ENCODE measurements at regions of chr7 and their contacts with region 1.

Region 1: GRCh38 chr7:75914730-75915585 is at the start of gene POR:
- DNase-seq: peak; percentile 75 to 99
- H3K4me3 ChIP-seq: peak within 1 kb of the TSS; percentile 66 to 89 (median 74)
- H3K27ac ChIP-seq: peak within 1 kb of the TSS; percentile 27; the same call in 1 of the 2 replicates
- H3K4me1 ChIP-seq: peaks cover 0 to 12% (median 4%) of the 10 kb centered on the region in 4 experiments; a peak in 4 of 7 replicates
- H3K27me3 ChIP-seq: no peaks in the 10 kb centered on the region
- CTCF ChIP-seq: no peak
- EP300 ChIP-seq: peak in 1 of 2 experiments; percentile 100; a peak in 2 of 3 replicates
- POLR2A ChIP-seq: peak; percentile 100
- RAD21 ChIP-seq: peak in 1 of 2 experiments; percentile 7; a peak in 2 of 4 replicates
- total RNA-seq, gene POR: 127 and 144 TPM in 2 replicates

Region 2: GRCh38 chr7:75814407-75814947 is 100.5 kb before region 1 on chr7:
- CTCF ChIA-PET with region 1: no interaction called
- POLR2A ChIA-PET with region 1: no interaction called
- DNase-seq: no peak
- H3K4me3 ChIP-seq: no peak overlapping the region
- H3K27ac ChIP-seq: no peak overlapping the region
- H3K4me1 ChIP-seq: peaks cover 0 to 3% (median 0%) of the 10 kb centered on the region in 4 experiments; a peak in 2 of 7 replicates
- H3K27me3 ChIP-seq: no peaks in the 10 kb centered on the region; a peak in 2 of 7 replicates
- CTCF ChIP-seq: no peak
- EP300 ChIP-seq: no peak
- POLR2A ChIP-seq: no peak
- RAD21 ChIP-seq: no peak

Region 3: DNA sequence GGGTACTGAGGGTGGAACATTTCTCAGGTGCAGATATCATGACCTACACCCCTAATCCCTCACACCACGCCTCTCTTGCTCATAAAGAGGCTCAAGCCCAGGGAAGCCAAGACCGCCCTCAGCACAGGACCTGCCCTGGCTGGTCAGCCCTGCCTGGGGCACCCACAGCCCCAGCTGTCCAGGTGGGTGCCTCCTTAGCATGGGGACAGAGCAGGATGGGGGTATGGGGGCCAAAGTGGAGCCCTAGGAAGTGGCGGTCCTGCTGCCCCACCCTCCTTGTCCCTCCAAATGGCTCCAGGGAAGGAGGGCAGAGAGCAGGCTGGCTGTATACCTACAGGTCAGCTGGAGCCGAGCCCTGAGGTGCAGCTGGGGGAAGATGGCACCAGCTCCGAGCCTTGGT is 15.9 kb before region 1 on chr7:
- CTCF ChIA-PET with region 1: interaction called, 3 read pairs
- POLR2A ChIA-PET with region 1: interaction called, 43 read pairs
- DNase-seq: no peak
- H3K4me3 ChIP-seq: no peak overlapping the region
- H3K27ac ChIP-seq: no peak overlapping the region
- H3K4me1 ChIP-seq: no peaks in the 10 kb centered on the region; a peak in 1 of 7 replicates
- H3K27me3 ChIP-seq: no peaks in the 10 kb centered on the region
- CTCF ChIP-seq: no peak
- EP300 ChIP-seq: no peak
- POLR2A ChIP-seq: no peak
- RAD21 ChIP-seq: no peak

Region 4: GRCh38 chr7:75937958-75938786 is 23.2 kb after region 1 on chr7:
- CTCF ChIA-PET with region 1: no interaction called
- POLR2A ChIA-PET with region 1: interaction called, 15 read pairs
- DNase-seq: no peak
- H3K4me3 ChIP-seq: no peak overlapping the region
- H3K27ac ChIP-seq: peak overlapping the region; percentile 5; the same call in 1 of the 2 replicates
- H3K4me1 ChIP-seq: 0 out of 7 replicates have a peak, but pooled peaks cover 0 to 2% (median 0%) of the 10 kb centered on the region in 4 experiments
- H3K27me3 ChIP-seq: no peaks in the 10 kb centered on the region
- CTCF ChIP-seq: no peak
- EP300 ChIP-seq: no peak
- POLR2A ChIP-seq: no peak
- RAD21 ChIP-seq: no peak

Region 5: GRCh38 chr7:75957012-75957736 is 42.2 kb after region 1 on chr7:
- CTCF ChIA-PET with region 1: no interaction called
- POLR2A ChIA-PET with region 1: interaction called, 24 read pairs
- DNase-seq: peak in 1 of 2 experiments; percentile 68
- H3K4me3 ChIP-seq: no peak overlapping the region; a peak in 1 of 8 replicates
- H3K27ac ChIP-seq: no peak overlapping the region
- H3K4me1 ChIP-seq: peaks cover 2 to 11% (median 4%) of the 10 kb centered on the region in 4 experiments
- H3K27me3 ChIP-seq: no peaks in the 10 kb centered on the region
- CTCF ChIP-seq: no peak
- EP300 ChIP-seq: peak in 1 of 2 experiments; percentile 55; a peak in 1 of 3 replicates
- POLR2A ChIP-seq: no peak
- RAD21 ChIP-seq: no peak